Breast epithelium (tissue), 4 donors: ENCODE measurements at regions of chr4 and their contacts with region 1.

Region 1: GRCh38 chr4:64105903-64106302 is 303.3 kb downstream of the TECRL start:
- DNase-seq: no peak
- H3K4me3 ChIP-seq: no peak overlapping the region
- H3K27ac ChIP-seq: no peak overlapping the region
- H3K4me1 ChIP-seq: no peaks in the 10 kb centered on the region
- H3K27me3 ChIP-seq: no peaks in the 10 kb centered on the region
- CTCF ChIP-seq: no peak
- POLR2A ChIP-seq: no peak

Region 2: DNA sequence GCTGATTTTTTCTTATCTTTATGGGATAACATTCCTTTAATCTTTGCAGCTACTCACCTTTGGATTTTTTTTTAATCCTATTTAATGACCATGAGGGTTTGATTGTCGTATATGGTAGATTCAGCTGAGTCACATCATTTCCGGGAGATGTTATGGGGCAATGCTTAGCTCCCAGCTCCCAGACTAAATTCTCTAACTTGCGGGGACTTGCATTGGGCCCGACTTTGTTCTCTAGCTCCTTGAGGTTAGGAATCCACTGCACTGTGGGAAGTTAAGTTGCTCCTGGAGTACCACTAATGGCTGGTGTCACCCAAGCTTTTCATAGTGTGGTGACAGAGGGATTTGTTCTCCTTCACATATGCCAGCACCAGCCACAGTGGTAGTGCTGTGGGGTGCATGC is 15.9 kb after region 1 on chr4:
- intact Hi-C with region 1: loop called (anchors 2 kb)
- DNase-seq: no peak
- H3K4me3 ChIP-seq: no peak overlapping the region
- H3K27ac ChIP-seq: no peak overlapping the region
- H3K4me1 ChIP-seq: no peaks in the 10 kb centered on the region
- H3K27me3 ChIP-seq: no peaks in the 10 kb centered on the region
- CTCF ChIP-seq: no peak
- POLR2A ChIP-seq: no peak